ENCODE measurements at regions of chr6 and their contacts with region 1.

Region 1: GRCh38 chr6:24126586-24127192 is 674 bp downstream of the NRSN1 start:
- DNase-seq: peak; percentile 85
- ATAC-seq: peak; percentile 88
- H3K4me3 ChIP-seq: peak overlapping the region in 2 of 3 experiments; percentile 30 to 67; a peak in 3 of 6 replicates
- H3K27ac ChIP-seq: no peak overlapping the region
- H3K4me1 ChIP-seq: peaks cover 22% of the 10 kb centered on the region
- H3K27me3 ChIP-seq: no peaks in the 10 kb centered on the region
- CTCF ChIP-seq: no peak
- EP300 ChIP-seq: no peak
- POLR2A ChIP-seq: no peak
- RAD21 ChIP-seq: peak; percentile 51

Region 2: DNA sequence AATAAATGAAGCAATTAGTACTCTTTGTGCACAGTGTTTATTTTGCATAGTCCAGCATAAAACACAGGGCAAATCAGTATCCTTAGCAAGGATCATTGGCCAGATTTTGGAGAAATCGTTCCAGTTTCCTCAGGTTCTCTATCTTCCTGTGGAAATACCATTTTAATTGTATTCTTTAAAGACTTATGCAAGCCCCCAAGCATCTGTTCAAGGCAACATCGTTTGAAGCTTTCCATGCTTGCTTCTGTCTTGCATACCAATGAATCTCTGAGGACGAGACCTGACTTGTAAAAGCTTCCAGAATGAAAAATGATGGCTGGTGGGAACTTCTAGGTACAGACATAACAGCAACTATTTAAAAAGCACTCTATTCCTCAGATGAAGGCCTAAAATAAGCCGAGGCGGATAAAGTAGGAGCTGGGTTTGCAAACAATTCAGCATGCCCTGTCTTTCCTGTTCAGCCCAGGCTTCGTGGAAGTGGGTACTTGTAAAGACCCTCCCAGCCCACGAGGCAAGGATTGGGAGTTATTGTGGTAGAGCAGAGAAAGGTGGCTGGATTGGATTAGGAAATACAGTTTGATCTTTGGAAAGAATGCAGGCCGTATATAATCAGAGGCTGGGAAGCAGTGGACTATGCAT is 20.9 kb after region 1 on chr6:
- CTCF ChIA-PET with region 1: no interaction called
- POLR2A ChIA-PET with region 1: interaction called, 7 read pairs
- in situ Hi-C with region 1: no loop called
- intact Hi-C with region 1: loop called (anchors 1 kb)
- DNase-seq: no peak
- ATAC-seq: no peak
- H3K4me3 ChIP-seq: peak overlapping the region in 1 of 3 experiments; percentile 15; a peak in 1 of 6 replicates
- H3K27ac ChIP-seq: peak overlapping the region; percentile 84
- H3K4me1 ChIP-seq: peaks cover 55% of the 10 kb centered on the region
- H3K27me3 ChIP-seq: no peaks in the 10 kb centered on the region
- CTCF ChIP-seq: no peak
- EP300 ChIP-seq: no peak
- POLR2A ChIP-seq: no peak; a peak in 1 of 4 replicates
- RAD21 ChIP-seq: no peak

Measured in HepG2 (cell line).